ENCODE measurements at regions of chr12 and their contacts with region 1.

Region 1: DNA sequence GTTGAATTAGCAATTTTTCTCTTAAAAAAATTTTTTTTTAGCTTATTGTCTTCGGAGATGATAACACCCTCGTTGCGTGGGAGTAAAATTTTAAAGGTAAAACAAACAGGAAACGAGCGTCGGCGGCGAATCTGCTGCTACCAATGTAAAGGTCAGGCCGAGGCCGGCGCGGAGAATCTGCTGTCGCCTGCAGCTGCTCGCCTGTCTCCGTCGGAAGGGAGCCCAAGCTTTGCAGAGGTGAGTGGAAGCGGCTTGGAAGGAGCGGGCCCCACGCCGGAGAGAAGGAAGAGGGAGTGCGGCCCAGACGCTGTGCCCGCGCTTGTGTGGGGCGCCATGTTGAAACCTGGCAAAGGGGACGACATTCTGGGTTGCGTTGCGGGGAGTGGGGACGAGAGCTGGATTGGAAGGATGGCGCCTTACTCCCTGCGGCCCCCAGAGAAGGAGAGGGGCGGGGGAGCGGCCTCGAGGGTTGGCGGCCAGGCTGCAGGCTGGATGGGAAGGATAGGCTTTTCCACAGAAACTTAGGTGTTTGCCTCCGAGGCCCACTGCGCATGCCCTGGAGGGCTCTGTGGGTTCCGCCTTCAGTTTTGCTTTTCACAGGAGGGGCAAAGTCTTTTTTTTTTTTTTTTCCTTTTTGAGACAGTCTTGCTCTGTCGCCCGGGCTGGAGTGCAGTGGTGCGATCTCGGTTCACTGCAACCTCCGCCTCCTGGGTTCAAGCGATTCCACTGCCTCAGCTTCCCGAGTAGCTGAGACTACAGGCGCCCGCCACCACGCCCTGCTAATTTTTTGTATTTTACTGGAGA is at the start of gene SNRNP35:
- DNase-seq: peak; percentile 69
- ATAC-seq: peak; percentile 85
- H3K4me3 ChIP-seq: peak within 1 kb of the TSS; percentile 87
- H3K27ac ChIP-seq: peak within 1 kb of the TSS; percentile 99
- H3K4me1 ChIP-seq: peaks cover 4% of the 10 kb centered on the region; the same call in 1 of the 2 replicates
- H3K27me3 ChIP-seq: no peaks in the 10 kb centered on the region
- CTCF ChIP-seq: no peak
- EP300 ChIP-seq: peak in 1 of 2 experiments; percentile 98; a peak in 2 of 4 replicates
- POLR2A ChIP-seq: peak; percentile 89
- RAD21 ChIP-seq: no peak
- polyA plus RNA-seq, gene SNRNP35: 25.0 to 49.6 TPM

Region 2: GRCh38 chr12:123160801-123161487 is 297.2 kb before region 1 on chr12:
- CTCF ChIA-PET with region 1: no interaction called
- POLR2A ChIA-PET with region 1: no interaction called
- RAD21 ChIA-PET with region 1: no interaction called
- SMC1A ChIA-PET with region 1: no interaction called
- in situ Hi-C with region 1: no loop called
- intact Hi-C with region 1: no loop called
- DNase-seq: no peak
- ATAC-seq: no peak
- H3K4me3 ChIP-seq: no peak overlapping the region
- H3K27ac ChIP-seq: no peak overlapping the region
- H3K4me1 ChIP-seq: 0 out of 2 replicates have a peak, but pooled peaks cover 4% of the 10 kb centered on the region
- H3K27me3 ChIP-seq: no peaks in the 10 kb centered on the region
- CTCF ChIP-seq: no peak
- EP300 ChIP-seq: no peak
- POLR2A ChIP-seq: no peak
- RAD21 ChIP-seq: no peak

Region 3: DNA sequence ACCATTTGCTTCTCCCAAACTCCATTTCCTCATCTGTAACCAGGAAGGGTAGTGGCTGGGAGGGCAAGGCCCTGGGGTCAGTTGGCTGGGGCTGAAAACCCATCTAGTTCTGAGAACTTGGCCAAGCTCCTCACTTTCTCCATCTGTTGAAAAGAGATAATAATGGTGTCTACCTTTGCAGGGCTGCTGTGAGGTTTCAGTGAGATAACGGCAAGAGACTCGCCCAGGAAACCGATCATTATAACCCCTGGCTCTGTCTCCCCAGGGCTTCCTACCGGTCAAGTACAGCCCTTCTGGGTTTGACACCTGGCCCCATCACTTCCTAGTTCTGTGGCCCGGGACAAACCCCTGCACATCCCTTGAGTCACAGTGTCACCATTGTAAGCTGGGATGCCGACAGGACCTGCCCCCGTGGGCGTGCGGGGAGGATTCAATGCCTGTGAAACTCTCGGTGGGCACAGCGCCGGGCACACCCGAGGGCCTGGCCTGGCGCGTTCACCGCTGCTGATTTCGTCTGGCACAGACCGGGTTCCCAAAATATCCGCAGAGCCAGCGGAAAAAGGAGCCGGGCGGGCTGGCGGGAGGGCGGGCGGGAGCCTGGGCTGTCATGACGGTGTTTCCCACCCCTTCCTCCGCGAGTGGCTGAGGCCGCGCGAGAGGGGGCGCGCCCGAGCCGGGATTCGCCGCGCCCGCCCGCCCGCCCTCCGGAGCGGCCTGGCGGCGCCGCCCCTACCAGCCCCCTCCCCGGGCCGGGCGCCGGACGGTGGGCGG is 69.8 kb before region 1 on chr12:
- CTCF ChIA-PET with region 1: interaction called, 3 read pairs
- POLR2A ChIA-PET with region 1: interaction called, 7 read pairs
- RAD21 ChIA-PET with region 1: interaction called, 4 read pairs
- SMC1A ChIA-PET with region 1: interaction called, 15 read pairs
- in situ Hi-C with region 1: no loop called
- intact Hi-C with region 1: loop called (anchors 2 kb)
- DNase-seq: peak; percentile 21
- ATAC-seq: peak; percentile 52
- H3K4me3 ChIP-seq: peak overlapping the region; percentile 98
- H3K27ac ChIP-seq: peak overlapping the region; percentile 66
- H3K4me1 ChIP-seq: peaks cover 20% of the 10 kb centered on the region
- H3K27me3 ChIP-seq: no peaks in the 10 kb centered on the region
- CTCF ChIP-seq: 0 out of 6 replicates have a peak, but pooled peaks of 1 of the 3 experiments have one; percentile 13
- EP300 ChIP-seq: 0 out of 4 replicates have a peak, but pooled peaks of 1 of the 2 experiments have one; percentile 10
- POLR2A ChIP-seq: no peak
- RAD21 ChIP-seq: no peak

Region 4: GRCh38 chr12:123427036-123427769 is 31.0 kb before region 1 on chr12:
- CTCF ChIA-PET with region 1: interaction called, 7 read pairs
- POLR2A ChIA-PET with region 1: interaction called, 27 read pairs
- RAD21 ChIA-PET with region 1: interaction called, 48 read pairs
- SMC1A ChIA-PET with region 1: interaction called, 44 read pairs
- in situ Hi-C with region 1: no loop called
- intact Hi-C with region 1: loop called (anchors 2 kb)
- DNase-seq: peak; percentile 97
- ATAC-seq: peak; percentile 90
- H3K4me3 ChIP-seq: peak overlapping the region; percentile 46; the same call in 1 of the 2 replicates
- H3K27ac ChIP-seq: peak overlapping the region; percentile 66
- H3K4me1 ChIP-seq: peaks cover 33% of the 10 kb centered on the region
- H3K27me3 ChIP-seq: no peaks in the 10 kb centered on the region
- CTCF ChIP-seq: no peak
- EP300 ChIP-seq: peak; percentile 42 to 77
- POLR2A ChIP-seq: peak; percentile 68
- RAD21 ChIP-seq: no peak

Region 5: DNA sequence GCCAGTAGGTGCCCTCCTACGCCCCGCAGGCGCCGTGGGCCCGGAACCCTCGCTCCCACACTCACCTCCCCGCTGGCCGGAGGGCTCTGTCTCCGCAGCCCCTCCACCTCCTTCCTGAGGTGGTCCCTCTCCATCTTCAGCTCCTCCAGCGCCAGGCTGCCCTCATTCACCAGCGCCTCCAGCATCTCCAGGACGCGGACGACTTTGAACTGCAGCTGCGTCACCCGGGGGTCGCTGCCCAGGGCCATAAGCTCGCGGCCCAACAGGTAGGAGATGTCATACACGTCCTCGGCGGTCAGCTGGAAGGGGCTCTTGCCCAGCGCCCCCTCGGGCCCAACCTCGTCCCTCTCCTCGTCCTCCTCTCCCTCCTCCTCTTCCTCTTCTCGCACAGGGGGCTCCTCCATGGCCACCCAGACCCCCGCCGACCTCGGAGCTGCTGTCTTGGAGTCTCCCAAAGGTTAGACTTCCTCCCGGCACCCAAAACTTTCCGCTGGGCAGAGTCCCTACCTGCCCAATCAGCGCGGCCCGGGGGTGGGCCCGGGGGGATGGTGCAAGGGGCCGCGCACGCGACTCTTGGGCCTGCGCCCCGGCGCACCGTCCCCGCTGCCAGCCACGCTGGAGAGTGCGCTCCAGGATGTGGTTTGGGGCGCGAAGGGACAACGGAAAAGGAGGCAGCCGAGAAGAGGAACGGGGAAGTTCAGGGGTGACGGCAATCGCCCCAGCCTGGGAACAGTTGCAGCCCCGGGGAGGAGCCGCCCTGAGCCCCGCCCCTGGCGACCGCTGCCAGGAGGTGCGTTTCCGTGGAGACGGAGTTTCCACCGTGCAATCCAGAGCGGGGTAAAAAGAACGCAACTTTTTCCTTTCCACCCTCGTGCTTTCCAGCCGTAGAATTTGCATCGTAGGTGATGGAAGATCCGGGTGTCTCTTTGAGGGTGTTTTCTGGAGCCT is 21.9 kb before region 1 on chr12 and contains the start of gene RILPL2:
- CTCF ChIA-PET with region 1: interaction called, 4 read pairs
- POLR2A ChIA-PET with region 1: interaction called, 33 read pairs
- RAD21 ChIA-PET with region 1: interaction called, 48 read pairs
- SMC1A ChIA-PET with region 1: interaction called, 48 read pairs
- in situ Hi-C with region 1: no loop called
- intact Hi-C with region 1: loop called (anchors 2 kb)
- DNase-seq: peak; percentile 86
- ATAC-seq: peak; percentile 84
- H3K4me3 ChIP-seq: peak within 1 kb of the TSS; percentile 82
- H3K27ac ChIP-seq: peak within 1 kb of the TSS; percentile 95
- H3K4me1 ChIP-seq: peaks cover 2% of the 10 kb centered on the region; the same call in 1 of the 2 replicates
- H3K27me3 ChIP-seq: no peaks in the 10 kb centered on the region
- CTCF ChIP-seq: no peak
- EP300 ChIP-seq: no peak; a peak in 1 of 4 replicates
- POLR2A ChIP-seq: peak; percentile 81
- RAD21 ChIP-seq: no peak; the same call in 1 of the 2 replicates
- polyA plus RNA-seq, gene RILPL2: 3.5 to 8.3 TPM

Region 6: GRCh38 chr12:123441523-123442164 is 16.5 kb before region 1 on chr12:
- CTCF ChIA-PET with region 1: no interaction called
- POLR2A ChIA-PET with region 1: interaction called, 33 read pairs
- RAD21 ChIA-PET with region 1: interaction called, 48 read pairs
- SMC1A ChIA-PET with region 1: interaction called, 48 read pairs
- in situ Hi-C with region 1: no loop called
- intact Hi-C with region 1: no loop called
- DNase-seq: peak; percentile 73
- ATAC-seq: peak; percentile 75
- H3K4me3 ChIP-seq: peak overlapping the region; percentile 67
- H3K27ac ChIP-seq: peak overlapping the region; percentile 81
- H3K4me1 ChIP-seq: peaks cover 33% of the 10 kb centered on the region
- H3K27me3 ChIP-seq: no peaks in the 10 kb centered on the region
- CTCF ChIP-seq: no peak
- EP300 ChIP-seq: peak; percentile 53 to 54; a peak in 2 of 4 replicates
- POLR2A ChIP-seq: no peak
- RAD21 ChIP-seq: no peak

Measured in GM12878 (cell line).